Thyroid gland (tissue), 4 donors: ENCODE measurements at regions of chr19 and their contacts with region 1.

Region 1: DNA sequence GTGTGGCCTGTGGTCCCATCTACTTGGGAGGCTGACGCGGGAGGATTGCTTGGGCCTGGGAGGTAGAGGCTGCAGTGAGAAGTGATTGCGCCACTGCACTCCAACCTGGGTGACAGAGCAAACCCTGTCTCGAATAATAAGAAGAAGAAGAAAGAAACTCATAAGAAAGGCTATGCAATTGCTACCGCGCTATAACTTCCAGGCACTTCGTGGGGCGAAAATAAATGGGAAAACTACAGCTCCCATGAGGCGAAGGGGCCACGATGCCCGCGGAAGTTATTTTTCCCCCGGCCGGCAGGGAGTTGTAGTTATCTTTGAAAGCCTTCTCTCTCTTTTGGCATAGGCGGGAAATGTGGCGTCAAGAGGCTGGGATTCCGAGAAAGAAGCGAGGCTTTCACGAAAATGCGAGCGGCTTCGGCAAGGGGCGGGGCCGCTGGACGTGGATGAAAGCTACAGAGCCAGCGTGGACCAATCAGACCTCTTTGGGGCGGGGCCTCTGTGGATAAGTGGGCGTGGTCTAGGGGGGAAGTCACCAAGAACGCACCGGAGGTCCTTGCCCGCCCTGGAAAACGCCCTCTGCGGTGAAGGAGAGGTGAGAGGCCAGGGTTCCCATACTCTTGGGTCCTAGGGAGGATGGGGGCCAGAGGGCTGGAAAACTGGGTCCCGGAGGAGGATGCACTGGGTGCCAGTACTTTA is at the start of gene NUCB1:
- DNase-seq: peak; percentile 100
- H3K4me3 ChIP-seq: peak within 1 kb of the TSS; percentile 67 to 91 (median 78)
- H3K27ac ChIP-seq: peak within 1 kb of the TSS; percentile 69 to 94 (median 85)
- H3K4me1 ChIP-seq: peaks cover 17 to 27% of the 10 kb centered on the region in 2 donors
- H3K27me3 ChIP-seq: no peaks in the 10 kb centered on the region
- CTCF ChIP-seq: peak in 4 of 6 experiments; percentile 2 to 47 (median 26)
- POLR2A ChIP-seq: peak in 1 of 2 donors; percentile 78
- total RNA-seq, gene NUCB1: 267 to 424 (median 371) TPM

Region 2: GRCh38 chr19:48746738-48747575 is 153.0 kb before region 1 on chr19 and contains the start of gene IZUMO1:
- intact Hi-C with region 1: no loop called
- DNase-seq: peak; percentile 75 to 78
- H3K4me3 ChIP-seq: peak within 1 kb of the TSS in 2 of 3 donors; percentile 17 to 20
- H3K27ac ChIP-seq: peak within 1 kb of the TSS; percentile 42 to 66 (median 65)
- H3K4me1 ChIP-seq: peaks cover 10 to 14% of the 10 kb centered on the region in 2 donors
- H3K27me3 ChIP-seq: no peaks in the 10 kb centered on the region
- CTCF ChIP-seq: no peak
- POLR2A ChIP-seq: no peak
- total RNA-seq, gene IZUMO1: 1.1 TPM in 2 of 4 donors, not detected in the others

Region 3: DNA sequence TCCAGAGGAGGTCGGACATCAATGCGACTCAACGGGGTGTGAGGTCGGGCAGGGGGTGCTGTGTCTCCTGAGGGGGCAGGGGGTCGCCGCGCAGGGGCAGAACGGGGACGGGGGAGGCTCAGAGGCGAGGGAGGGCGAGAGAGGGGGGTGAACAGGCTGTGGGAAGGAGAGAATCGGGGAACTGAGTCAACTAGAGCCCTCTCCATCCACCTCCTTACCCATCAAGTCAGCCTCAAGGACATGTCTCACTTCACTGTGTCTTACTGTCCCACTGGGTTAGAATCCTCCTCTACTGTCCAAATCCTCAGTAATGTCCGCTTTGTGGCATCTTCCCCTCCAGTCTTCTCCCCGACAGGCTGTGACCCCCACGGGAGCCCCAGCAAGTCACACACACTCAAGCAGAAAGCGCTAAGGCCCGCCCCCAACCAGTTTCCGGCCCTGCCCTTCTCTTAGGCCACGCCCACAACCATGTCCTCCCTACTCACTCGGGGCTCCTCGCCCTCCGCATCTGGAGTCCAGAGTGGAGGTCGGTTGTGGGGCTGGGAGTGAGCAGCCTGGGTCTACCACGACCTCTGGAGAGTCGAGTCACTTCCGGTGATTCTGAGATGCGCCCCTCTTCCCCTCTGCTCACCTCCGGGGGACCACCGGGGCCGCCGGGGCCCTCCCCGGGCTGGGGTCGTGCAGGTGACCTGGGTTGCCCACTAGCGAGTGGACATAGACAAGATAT is 40.8 kb before region 1 on chr19:
- intact Hi-C with region 1: no loop called
- DNase-seq: no peak
- H3K4me3 ChIP-seq: no peak overlapping the region
- H3K27ac ChIP-seq: no peak overlapping the region
- H3K4me1 ChIP-seq: peaks cover 0 to 4% of the 10 kb centered on the region in 2 donors
- H3K27me3 ChIP-seq: no peaks in the 10 kb centered on the region
- CTCF ChIP-seq: no peak
- POLR2A ChIP-seq: no peak

Region 4: DNA sequence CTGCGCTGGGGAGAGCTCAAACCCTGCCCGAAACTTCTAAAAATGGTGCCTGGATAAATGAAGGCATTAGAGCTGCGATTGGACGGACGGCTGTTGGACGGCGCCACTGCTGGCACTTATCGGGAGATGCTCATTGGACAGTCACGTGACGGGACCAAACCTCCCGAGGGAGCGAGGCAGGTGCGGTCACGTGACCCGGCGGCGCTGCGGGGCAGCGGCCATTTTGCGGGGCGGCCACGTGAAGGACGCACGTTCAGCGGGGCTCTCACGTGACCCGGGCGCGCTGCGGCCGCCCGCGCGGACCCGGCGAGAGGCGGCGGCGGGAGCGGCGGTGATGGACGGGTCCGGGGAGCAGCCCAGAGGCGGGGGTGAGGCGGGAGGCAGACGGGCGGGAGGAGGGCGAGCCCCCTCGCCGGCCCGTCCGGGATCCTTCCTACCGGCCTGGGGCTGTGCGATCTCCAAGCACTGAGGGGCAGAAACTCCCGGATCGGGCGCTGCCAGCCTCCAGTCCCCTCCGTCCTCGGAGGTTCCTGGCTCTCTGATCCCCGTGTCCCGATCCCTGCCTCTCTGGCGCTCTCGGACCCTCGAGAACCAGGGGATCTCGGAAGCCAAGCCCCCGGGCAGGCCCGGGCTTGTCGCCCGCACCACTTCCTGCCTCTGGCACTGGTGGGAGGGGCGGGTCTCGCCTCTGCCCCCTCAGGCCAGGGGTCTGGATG is 54.8 kb after region 1 on chr19 and contains the start of gene BAX:
- intact Hi-C with region 1: loop called (anchors 10 kb)
- DNase-seq: peak; percentile 97 to 98
- H3K4me3 ChIP-seq: peak within 1 kb of the TSS; percentile 7 to 82 (median 8)
- H3K27ac ChIP-seq: peak within 1 kb of the TSS; percentile 57 to 86 (median 63)
- H3K4me1 ChIP-seq: peaks cover 8 to 14% of the 10 kb centered on the region in 2 donors
- H3K27me3 ChIP-seq: no peaks in the 10 kb centered on the region
- CTCF ChIP-seq: peak in 3 of 6 experiments; percentile 2 to 27 (median 14)
- POLR2A ChIP-seq: peak in 1 of 2 donors; percentile 79
- total RNA-seq, gene BAX: 28.2 to 74.4 (median 41.2) TPM